PC-9 (cell line): ENCODE measurements at regions of chr2 and their contacts with region 1.

Region 1: DNA sequence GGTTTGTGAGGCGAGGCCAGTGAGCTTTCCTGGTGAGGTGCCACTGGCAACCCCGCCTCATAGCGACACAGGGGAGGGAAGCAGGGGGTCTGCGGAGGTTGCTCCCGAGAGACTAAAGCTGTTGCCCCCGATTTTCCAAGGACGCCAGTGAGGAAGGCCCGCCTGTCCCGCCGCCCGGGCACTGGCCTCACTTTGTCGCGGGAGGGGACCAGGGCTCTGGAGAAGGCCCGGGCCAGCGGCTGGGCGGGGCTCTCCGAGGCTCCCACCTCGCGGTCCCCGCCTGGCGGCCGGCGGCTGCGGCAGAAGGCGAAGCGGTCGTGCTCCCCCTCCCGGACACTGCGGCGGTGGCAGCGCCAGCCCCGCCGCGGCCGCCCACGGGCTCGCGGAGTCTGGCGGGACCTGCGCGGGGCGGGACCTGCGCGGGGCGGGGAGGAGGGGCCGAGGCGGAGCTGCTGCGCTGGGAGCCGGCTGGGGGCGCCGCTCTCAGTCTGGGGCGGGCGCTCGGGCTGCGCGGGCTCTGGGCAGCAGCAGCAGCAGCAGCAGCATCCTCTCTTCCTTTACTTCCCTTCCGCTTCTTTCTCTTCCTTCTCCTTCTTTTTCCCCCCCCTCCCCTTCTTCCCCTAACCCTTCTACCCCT is at the start of gene MAP2:
- DNase-seq: peak; percentile 50 to 88
- H3K4me3 ChIP-seq: peak within 1 kb of the TSS; percentile 93
- H3K27ac ChIP-seq: peak within 1 kb of the TSS; percentile 83
- H3K4me1 ChIP-seq: peaks cover 19% of the 10 kb centered on the region
- H3K27me3 ChIP-seq: no peaks in the 10 kb centered on the region
- CTCF ChIP-seq: peak; percentile 36; the same call in 1 of the 2 replicates
- total RNA-seq, gene MAP2: 67.7 and 71.1 TPM in 2 replicates

Region 2: DNA sequence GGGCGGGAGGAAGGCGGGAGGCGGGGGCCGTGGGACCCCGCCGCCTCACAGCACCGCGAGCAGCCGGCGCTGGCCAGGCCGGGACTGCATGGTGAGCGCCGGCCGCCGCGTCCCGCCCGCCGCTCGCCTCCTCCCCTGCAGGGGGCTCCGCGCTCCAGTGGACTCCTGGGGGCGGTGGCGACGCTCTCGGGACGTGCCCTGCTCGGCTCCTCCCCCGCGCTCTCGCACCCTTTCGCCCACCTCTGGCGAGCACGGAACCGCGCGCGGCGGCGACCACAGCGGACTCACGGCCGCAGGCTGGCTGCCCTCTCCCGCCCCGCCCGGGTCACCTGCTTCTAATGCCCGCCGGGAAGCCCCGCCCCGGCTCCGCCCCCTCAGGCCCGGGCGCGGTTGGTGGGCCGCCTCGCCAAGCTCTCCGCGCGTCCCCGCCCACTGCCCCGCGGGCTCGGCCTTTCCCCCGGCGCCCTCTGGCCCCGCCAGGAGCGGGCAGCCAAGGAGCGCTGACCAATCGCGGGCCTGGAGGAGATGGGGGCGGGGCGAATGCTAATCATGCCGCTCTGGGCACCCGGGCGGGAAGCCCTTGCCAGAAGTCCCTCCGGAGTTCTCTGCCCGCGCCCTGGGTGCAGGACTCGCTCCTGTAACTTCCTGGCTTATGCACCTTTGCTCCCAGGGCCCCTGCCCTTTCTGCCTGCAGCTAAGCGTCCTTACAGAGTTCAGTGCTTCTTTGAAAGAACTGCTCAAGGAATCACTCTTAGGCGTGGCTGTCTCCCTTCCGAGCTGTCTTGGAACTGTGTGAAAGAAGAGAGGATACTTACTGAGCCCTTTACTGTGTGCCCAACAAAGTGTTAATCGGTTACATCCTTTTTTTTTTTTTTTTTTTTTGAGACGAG is 1653.8 kb before region 1 on chr2 and contains the start of gene FZD5:
- CTCF ChIA-PET with region 1: no interaction called
- POLR2A ChIA-PET with region 1: no interaction called
- intact Hi-C with region 1: no loop called
- DNase-seq: peak; percentile 86 to 98
- H3K4me3 ChIP-seq: peak within 1 kb of the TSS; percentile 71
- H3K27ac ChIP-seq: 0 out of 2 replicates have a peak within 1 kb of the TSS, but pooled peaks have one; percentile 20
- H3K4me1 ChIP-seq: peaks cover 21% of the 10 kb centered on the region
- H3K27me3 ChIP-seq: no peaks in the 10 kb centered on the region
- CTCF ChIP-seq: no peak
- total RNA-seq, gene FZD5: 5.6 and 6.8 TPM in 2 replicates

Region 3: DNA sequence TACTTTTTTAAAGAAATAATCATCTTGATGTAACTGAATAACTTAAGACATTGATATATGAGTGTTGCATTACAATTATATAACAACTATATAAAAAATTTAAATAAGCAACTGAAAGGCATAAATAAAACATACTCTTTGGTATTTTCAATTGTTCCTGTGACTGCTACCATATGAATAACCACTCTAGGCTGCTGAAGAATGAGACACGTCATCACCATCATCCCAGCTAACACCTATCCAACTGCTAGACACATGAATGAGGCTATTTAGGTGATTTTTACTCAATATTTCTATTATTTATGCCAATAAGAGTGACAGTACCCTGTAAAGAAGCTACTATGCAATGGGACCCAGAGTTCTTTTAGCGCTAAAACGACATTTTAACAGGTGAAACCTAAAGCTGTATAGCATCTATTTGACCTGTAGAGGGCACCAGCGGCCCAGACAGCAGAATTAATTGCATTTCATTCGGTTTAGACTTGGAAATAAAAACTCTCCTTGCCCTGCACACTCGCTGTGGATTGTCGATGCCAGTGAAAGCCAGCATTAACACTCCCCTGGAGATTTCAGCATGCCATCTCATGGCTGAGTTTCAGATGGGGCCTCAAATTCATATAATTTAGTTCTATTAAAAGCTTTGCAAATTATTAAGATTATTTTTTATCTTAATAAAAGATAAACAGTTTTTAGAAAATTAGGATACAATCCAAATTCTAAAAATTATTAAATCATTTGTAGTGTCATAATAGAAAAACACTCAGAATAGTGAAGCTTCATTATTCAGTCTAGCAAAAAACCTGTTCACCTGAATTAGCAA is 89.3 kb before region 1 on chr2:
- CTCF ChIA-PET with region 1: interaction called, 11 read pairs
- POLR2A ChIA-PET with region 1: no interaction called
- intact Hi-C with region 1: loop called (anchors 1 kb)
- DNase-seq: peak; percentile 44 to 51
- H3K4me3 ChIP-seq: no peak overlapping the region
- H3K27ac ChIP-seq: no peak overlapping the region
- H3K4me1 ChIP-seq: no peaks in the 10 kb centered on the region
- H3K27me3 ChIP-seq: no peaks in the 10 kb centered on the region
- CTCF ChIP-seq: peak; percentile 84

Region 4: GRCh38 chr2:209380293-209380692 is 43.4 kb before region 1 on chr2:
- CTCF ChIA-PET with region 1: no interaction called
- POLR2A ChIA-PET with region 1: interaction called, 5 read pairs
- intact Hi-C with region 1: loop called (anchors 5 kb)
- DNase-seq: peak in 1 of 2 experiments; percentile 42
- H3K4me3 ChIP-seq: no peak overlapping the region
- H3K27ac ChIP-seq: peak overlapping the region; percentile 39; the same call in 1 of the 2 replicates
- H3K4me1 ChIP-seq: peaks cover 19% of the 10 kb centered on the region
- H3K27me3 ChIP-seq: no peaks in the 10 kb centered on the region
- CTCF ChIP-seq: no peak

Region 5: DNA sequence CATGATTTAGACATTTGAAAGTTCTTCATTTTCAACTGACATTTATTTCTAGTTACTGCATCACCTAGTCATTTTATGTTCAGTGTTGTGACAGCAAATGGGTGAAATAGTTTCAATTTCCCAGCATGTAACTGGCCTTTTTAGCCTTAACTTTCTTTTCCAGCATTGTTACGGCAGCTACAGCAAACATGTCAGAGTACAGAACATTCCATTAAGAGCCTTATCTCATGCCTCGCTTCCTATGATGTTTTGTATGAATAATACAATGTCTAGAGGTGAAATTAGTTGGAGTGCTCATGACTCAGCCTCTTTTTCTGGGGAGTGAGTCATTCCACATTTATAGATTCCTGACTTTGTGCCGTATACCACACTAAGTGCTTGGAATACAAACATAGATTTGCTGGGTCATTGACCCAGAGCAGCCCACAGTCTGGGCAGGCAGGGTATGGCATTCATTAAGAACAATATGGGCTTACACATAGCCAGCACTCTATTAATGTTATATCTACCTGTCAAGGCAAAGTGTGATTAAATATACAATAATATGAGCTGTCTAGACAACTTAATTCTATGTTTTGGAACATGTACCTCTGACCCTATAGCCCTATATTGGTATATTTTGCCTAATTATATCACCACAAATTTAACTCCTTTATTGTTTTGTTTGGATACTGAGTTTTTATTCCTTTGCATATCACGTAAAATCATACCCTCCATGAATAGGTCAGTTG is 72.3 kb after region 1 on chr2:
- CTCF ChIA-PET with region 1: no interaction called
- POLR2A ChIA-PET with region 1: interaction called, 3 read pairs
- intact Hi-C with region 1: loop called (anchors 1 kb)
- DNase-seq: peak; percentile 55 to 92
- H3K4me3 ChIP-seq: no peak overlapping the region
- H3K27ac ChIP-seq: peak overlapping the region; percentile 71
- H3K4me1 ChIP-seq: peaks cover 18% of the 10 kb centered on the region
- H3K27me3 ChIP-seq: no peaks in the 10 kb centered on the region
- CTCF ChIP-seq: no peak

Region 6: GRCh38 chr2:209577376-209578357 is 154.0 kb after region 1 on chr2:
- CTCF ChIA-PET with region 1: interaction called, 3 read pairs
- POLR2A ChIA-PET with region 1: interaction called, 3 read pairs
- intact Hi-C with region 1: loop called (anchors 1 kb)
- DNase-seq: no peak
- H3K4me3 ChIP-seq: no peak overlapping the region
- H3K27ac ChIP-seq: no peak overlapping the region
- H3K4me1 ChIP-seq: no peaks in the 10 kb centered on the region
- H3K27me3 ChIP-seq: no peaks in the 10 kb centered on the region
- CTCF ChIP-seq: peak; percentile 67

Region 7: DNA sequence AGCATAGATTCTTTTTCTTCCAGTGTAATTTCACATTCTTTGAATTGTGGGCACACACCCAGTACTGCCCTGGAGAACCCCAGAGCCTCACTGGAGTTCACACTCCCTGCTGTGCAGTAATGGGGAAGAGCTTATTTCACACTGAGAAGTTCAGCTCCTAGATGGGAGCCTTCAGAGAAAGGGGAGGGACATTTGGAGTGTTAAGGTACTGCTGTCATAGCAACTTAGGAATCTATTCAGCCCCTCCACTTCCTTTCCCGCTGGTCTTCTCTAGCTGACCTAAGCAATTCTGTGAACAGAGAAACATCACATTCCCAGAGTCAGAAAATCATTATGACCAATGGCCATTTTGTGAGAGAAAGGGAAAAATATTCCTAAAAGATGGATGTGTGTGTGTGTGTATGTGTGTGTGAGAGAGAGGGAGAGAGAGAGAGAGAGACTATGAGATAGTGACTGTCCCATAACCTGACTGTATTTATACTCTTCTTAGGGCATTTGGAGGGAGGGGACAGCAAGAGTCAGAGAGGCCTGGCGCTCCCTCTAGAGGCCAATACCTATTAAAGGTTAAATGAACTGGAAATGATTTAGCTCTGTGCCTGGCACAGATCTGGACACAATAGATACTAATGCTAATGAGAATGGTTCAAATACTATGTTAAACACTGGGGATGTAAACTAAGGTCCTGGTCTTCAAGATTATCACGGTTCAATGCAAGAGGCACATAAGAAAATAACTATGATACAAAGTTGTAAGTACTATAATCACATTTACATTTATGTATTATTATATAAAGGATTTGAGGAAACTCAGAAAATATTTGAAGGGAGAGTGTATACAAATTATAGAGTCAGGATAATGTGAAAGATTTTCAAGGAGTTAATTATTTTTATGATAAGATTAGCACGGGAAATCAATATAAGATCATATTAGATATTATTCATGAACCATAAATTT is 537.3 kb after region 1 on chr2:
- CTCF ChIA-PET with region 1: interaction called, 5 read pairs
- POLR2A ChIA-PET with region 1: no interaction called
- intact Hi-C with region 1: loop called (anchors 2 kb)
- DNase-seq: peak in 1 of 2 experiments; percentile 23
- H3K4me3 ChIP-seq: no peak overlapping the region
- H3K27ac ChIP-seq: no peak overlapping the region
- H3K4me1 ChIP-seq: no peaks in the 10 kb centered on the region
- H3K27me3 ChIP-seq: no peaks in the 10 kb centered on the region
- CTCF ChIP-seq: peak; percentile 72